ENCODE measurements at regions of chr20 and their contacts with region 1.

Region 1: GRCh38 chr20:43055181-43055884 is 134.4 kb downstream of the PTPRT start:
- DNase-seq: no peak
- H3K4me3 ChIP-seq: no peak overlapping the region
- H3K27ac ChIP-seq: no peak overlapping the region
- H3K4me1 ChIP-seq: no peaks in the 10 kb centered on the region
- H3K27me3 ChIP-seq: no peaks in the 10 kb centered on the region
- CTCF ChIP-seq: no peak
- EP300 ChIP-seq: no peak
- POLR2A ChIP-seq: no peak

Region 2: DNA sequence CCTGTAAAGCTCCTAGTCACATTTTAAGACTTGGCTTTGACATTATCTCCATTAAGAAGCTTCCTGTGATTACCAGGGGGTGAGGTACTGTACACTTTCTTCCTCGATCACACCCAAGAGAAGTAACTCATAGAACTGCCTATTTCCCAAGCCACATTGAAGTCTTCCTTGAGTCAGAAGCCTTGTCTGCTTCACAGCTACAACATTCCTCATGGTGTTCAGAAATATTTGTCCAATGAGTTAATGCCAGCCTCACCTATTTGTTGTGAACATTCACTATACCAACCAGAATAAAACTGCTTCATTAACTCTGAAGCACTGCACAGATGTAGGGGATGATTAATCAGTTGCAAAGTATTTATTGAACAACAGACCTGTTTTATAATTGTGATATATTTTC is 487.9 kb before region 1 on chr20:
- intact Hi-C with region 1: loop called (anchors 5 kb)
- DNase-seq: peak; percentile 8
- H3K4me3 ChIP-seq: no peak overlapping the region
- H3K27ac ChIP-seq: no peak overlapping the region
- H3K4me1 ChIP-seq: no peaks in the 10 kb centered on the region
- H3K27me3 ChIP-seq: no peaks in the 10 kb centered on the region
- CTCF ChIP-seq: no peak
- EP300 ChIP-seq: no peak
- POLR2A ChIP-seq: no peak

Measured in esophagus muscularis mucosa (tissue), 4 donors.